Activated CD8-positive, alpha-beta T cell treated with anti-CD3 and anti-CD28 coated beads for 36 hours (primary cell): ENCODE measurements at regions of chr11 and their contacts with region 1.

Region 1: GRCh38 chr11:19259487-19260345 is 19.0 kb upstream of the E2F8 start:
- DNase-seq: peak; percentile 82
- ATAC-seq: peak; percentile 94
- H3K4me3 Mint-ChIP-seq: no peak overlapping the region
- H3K27ac Mint-ChIP-seq: no peak overlapping the region
- H3K4me1 Mint-ChIP-seq: no peaks in the 10 kb centered on the region
- H3K27me3 Mint-ChIP-seq: peaks cover 2% of the 10 kb centered on the region
- CTCF ChIP-seq: peak; percentile 89

Region 2: GRCh38 chr11:19244102-19244501 is 15.6 kb before region 1 on chr11:
- CTCF ChIA-PET with region 1: interaction called, 11 read pairs
- POLR2A ChIA-PET with region 1: interaction called, 3 read pairs
- intact Hi-C with region 1: no loop called
- DNase-seq: no peak
- ATAC-seq: no peak
- H3K4me3 Mint-ChIP-seq: no peak overlapping the region
- H3K27ac Mint-ChIP-seq: no peak overlapping the region
- H3K4me1 Mint-ChIP-seq: peaks cover 6% of the 10 kb centered on the region
- H3K27me3 Mint-ChIP-seq: peaks cover 43% of the 10 kb centered on the region
- CTCF ChIP-seq: no peak

Region 3: DNA sequence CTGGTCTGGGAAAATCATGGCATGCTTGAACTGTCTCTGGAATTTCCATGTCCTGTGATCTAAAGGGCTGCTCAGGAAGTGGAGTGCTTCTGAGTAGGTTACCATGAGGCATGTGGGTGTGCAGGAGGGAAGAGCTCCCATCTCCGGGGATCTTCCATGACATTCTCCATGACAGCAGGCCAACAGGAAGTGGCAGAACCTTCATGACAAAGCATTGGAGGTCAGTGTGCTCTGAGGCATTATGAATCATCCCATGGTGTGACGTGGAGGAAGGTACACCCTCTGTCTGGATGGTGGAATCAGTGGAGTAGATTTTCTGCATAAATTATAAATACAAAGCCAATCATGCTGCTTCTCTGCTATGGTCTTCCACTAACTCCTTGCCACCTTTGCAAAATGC is 120.7 kb after region 1 on chr11:
- CTCF ChIA-PET with region 1: no interaction called
- POLR2A ChIA-PET with region 1: no interaction called
- intact Hi-C with region 1: no loop called
- DNase-seq: no peak
- ATAC-seq: no peak
- H3K4me3 Mint-ChIP-seq: no peak overlapping the region
- H3K27ac Mint-ChIP-seq: no peak overlapping the region
- H3K4me1 Mint-ChIP-seq: no peaks in the 10 kb centered on the region
- H3K27me3 Mint-ChIP-seq: peaks cover 14% of the 10 kb centered on the region
- CTCF ChIP-seq: no peak